ENCODE measurements at regions of chr2 and their contacts with region 1.

Region 1: GRCh38 chr2:25794544-25795276 is 83.6 kb downstream of the ASXL2 start:
- DNase-seq: no peak
- H3K4me3 Mint-ChIP-seq: peak overlapping the region; percentile 85
- H3K27ac Mint-ChIP-seq: peak overlapping the region; percentile 91
- H3K4me1 Mint-ChIP-seq: peaks cover 70% of the 10 kb centered on the region
- H3K27me3 Mint-ChIP-seq: no peaks in the 10 kb centered on the region

Region 2: DNA sequence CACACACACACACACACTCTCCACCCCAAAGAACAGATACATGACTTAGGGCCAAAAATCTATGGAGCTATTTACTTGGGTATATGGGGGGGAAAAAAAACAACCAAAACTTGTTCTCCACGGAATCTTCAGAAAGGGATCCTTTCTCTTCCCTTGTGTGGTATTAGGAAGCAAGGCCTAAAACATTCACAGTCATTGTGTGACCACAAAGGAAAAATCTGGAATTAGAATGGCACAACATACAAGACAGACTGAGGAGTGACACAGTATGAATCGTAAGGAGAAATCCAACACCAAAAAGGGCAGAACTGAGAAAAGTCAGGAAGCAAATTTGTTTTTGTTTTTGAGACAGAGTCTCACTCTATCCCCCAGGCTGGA is 13.3 kb after region 1 on chr2:
- intact Hi-C with region 1: loop called (anchors 1 kb)
- DNase-seq: no peak
- H3K4me3 Mint-ChIP-seq: no peak overlapping the region
- H3K27ac Mint-ChIP-seq: peak overlapping the region; percentile 21
- H3K4me1 Mint-ChIP-seq: peaks cover 60% of the 10 kb centered on the region
- H3K27me3 Mint-ChIP-seq: no peaks in the 10 kb centered on the region

Region 3: GRCh38 chr2:25825238-25825637 is 30.5 kb after region 1 on chr2:
- intact Hi-C with region 1: loop called (anchors 2 kb)
- DNase-seq: no peak
- H3K4me3 Mint-ChIP-seq: peak overlapping the region; percentile 72
- H3K27ac Mint-ChIP-seq: peak overlapping the region; percentile 78
- H3K4me1 Mint-ChIP-seq: peaks cover 61% of the 10 kb centered on the region
- H3K27me3 Mint-ChIP-seq: no peaks in the 10 kb centered on the region

Region 4: DNA sequence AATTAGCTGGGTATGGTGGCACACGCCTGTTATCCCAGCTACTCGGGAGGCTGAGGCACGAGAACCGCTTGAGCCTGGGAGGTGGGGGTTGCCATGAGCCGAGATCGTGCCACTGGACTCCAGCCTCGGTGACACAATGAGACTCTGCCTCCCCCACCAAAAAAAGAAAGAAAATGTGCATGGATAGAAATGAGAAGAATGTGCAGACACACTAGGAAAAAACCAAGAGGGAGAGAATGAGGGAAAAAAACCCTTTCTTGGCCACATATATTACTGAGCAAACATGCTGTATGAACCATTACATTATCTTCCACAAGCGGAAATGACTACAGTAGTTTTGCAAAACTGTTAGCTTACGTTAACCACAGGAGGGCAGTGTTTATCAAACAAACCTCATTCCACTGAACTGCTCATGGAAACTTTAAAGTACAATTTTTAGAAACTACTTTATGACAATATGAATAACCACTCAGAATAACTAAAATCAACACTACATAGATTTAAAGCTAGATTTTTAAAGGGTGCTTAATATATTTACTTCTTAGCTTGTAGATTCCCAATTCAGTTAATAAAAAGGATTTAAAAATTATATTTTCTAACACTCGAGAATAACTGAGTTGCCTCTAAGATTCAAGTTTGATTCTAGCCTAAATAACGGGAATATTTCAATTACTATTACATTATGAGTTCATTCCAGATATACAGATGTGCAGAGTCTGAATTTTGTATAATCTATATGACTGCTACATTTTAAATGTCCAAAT is 57.2 kb after region 1 on chr2:
- intact Hi-C with region 1: loop called (anchors 1 kb)
- DNase-seq: peak; percentile 25
- H3K4me3 Mint-ChIP-seq: peak overlapping the region; percentile 75
- H3K27ac Mint-ChIP-seq: peak overlapping the region; percentile 85
- H3K4me1 Mint-ChIP-seq: peaks cover 47% of the 10 kb centered on the region
- H3K27me3 Mint-ChIP-seq: no peaks in the 10 kb centered on the region

Measured in activated T-helper 2 cell treated with anti-CD3 and anti-CD28 coated beads, Interferon-gamma antibody, Interleukin-2, Interleukin-4, amounts not matched to agents 10 μg/mL and 5 μg/mL and 100 μg/mL, durations not matched to agents 14 hours and 24 hours and 36 hours (primary cell).